Sigmoid colon (tissue), 7 donors: ENCODE measurements at regions of chr15 and their contacts with region 1.

Region 1: DNA sequence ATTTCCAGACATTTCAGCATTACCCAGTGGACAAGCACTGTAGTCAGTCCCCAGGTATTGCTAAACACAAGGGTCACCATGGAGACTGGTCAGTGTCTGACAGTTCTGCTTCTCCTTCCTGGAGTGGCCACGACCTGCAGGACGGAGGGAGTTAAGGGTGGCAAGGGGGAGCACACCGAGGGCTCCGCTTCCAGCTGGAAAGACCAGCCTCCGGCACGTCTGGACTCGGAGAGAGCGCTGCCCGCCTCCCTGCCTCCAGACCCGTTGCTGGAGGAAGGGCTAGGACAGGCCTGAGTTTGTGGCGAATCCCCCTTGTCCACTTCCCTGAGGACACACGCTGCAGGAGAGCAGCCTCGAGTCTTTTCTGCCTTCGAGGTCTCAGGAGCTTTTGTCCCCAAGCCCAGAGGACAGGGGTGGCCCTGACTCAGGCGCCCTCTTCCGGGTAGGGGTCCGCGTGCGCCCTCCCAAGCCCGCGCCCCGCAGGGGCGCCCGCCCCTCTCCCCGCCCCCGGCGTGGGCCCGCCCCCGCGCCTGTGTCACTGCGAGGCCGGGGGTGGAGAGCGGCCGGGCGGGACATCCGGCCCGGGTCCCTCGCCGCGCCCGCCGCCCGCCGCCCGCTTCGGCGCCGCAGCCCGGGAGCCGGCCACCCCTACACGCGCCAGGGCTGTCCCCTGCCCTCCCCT is at the start of gene CHST14:
- DNase-seq: peak; percentile 75
- H3K4me3 ChIP-seq: peak within 1 kb of the TSS; percentile 61 to 92 (median 82)
- H3K27ac ChIP-seq: peak within 1 kb of the TSS; percentile 84 to 89 (median 88)
- H3K4me1 ChIP-seq: peaks cover 0 to 22% (median 18%) of the 10 kb centered on the region in 4 donors
- H3K27me3 ChIP-seq: no peaks in the 10 kb centered on the region
- CTCF ChIP-seq: no peak
- EP300 ChIP-seq: no peak
- POLR2A ChIP-seq: no peak
- total RNA-seq, gene CHST14: 6.4 to 10.2 (median 7.4) TPM

Region 2: DNA sequence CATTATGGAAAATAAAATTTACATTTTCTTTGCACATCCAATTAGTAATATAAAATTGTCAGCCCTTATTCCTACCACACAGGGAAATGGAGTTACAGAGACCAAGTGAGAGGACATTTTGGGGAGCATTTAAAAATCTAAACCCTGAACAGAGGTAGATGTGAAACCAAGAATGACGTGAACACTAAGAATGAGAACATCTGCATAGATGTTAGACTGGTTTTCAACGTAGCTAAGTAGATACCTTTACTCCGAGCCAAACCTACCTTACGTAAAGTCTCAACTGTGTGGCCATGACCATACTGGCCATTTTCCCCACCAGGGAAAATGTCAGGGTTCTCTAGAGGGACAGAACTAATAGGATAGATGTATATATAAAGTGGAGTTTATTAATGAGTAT is 941.1 kb before region 1 on chr15:
- intact Hi-C with region 1: no loop called
- DNase-seq: no peak
- H3K4me3 ChIP-seq: no peak overlapping the region
- H3K27ac ChIP-seq: no peak overlapping the region
- H3K4me1 ChIP-seq: peaks cover 0 to 9% (median 4%) of the 10 kb centered on the region in 4 donors
- H3K27me3 ChIP-seq: no peaks in the 10 kb centered on the region
- CTCF ChIP-seq: no peak
- EP300 ChIP-seq: no peak
- POLR2A ChIP-seq: no peak

Region 3: GRCh38 chr15:40367686-40368611 is 102.6 kb before region 1 on chr15:
- intact Hi-C with region 1: no loop called
- DNase-seq: peak; percentile 92
- H3K4me3 ChIP-seq: peak overlapping the region in 3 of 4 donors; percentile 34 to 48 (median 41)
- H3K27ac ChIP-seq: peak overlapping the region; percentile 25 to 82 (median 74)
- H3K4me1 ChIP-seq: peaks cover 0 to 23% (median 21%) of the 10 kb centered on the region in 4 donors
- H3K27me3 ChIP-seq: no peaks in the 10 kb centered on the region
- CTCF ChIP-seq: peak; percentile 70 to 80 (median 76)
- EP300 ChIP-seq: no peak
- POLR2A ChIP-seq: no peak

Region 4: GRCh38 chr15:40440743-40441564 is 29.6 kb before region 1 on chr15 and contains the start of gene BAHD1:
- intact Hi-C with region 1: loop called (anchors 2 kb)
- DNase-seq: peak; percentile 98
- H3K4me3 ChIP-seq: peak within 1 kb of the TSS; percentile 89 to 98 (median 92)
- H3K27ac ChIP-seq: peak within 1 kb of the TSS; percentile 79 to 85 (median 82)
- H3K4me1 ChIP-seq: peaks cover 0 to 65% (median 57%) of the 10 kb centered on the region in 4 donors
- H3K27me3 ChIP-seq: peaks cover 15 to 25% (median 19%) of the 10 kb centered on the region in 3 donors
- CTCF ChIP-seq: no peak
- EP300 ChIP-seq: no peak
- POLR2A ChIP-seq: no peak
- total RNA-seq, gene BAHD1: 7.7 to 16.3 (median 9.3) TPM

Region 5: GRCh38 chr15:40506964-40507571 is 36.5 kb after region 1 on chr15:
- intact Hi-C with region 1: loop called (anchors 2 kb)
- DNase-seq: peak; percentile 89
- H3K4me3 ChIP-seq: peak overlapping the region; percentile 4 to 38 (median 32)
- H3K27ac ChIP-seq: peak overlapping the region in 2 of 4 donors; percentile 32 to 35
- H3K4me1 ChIP-seq: peaks cover 0 to 21% (median 11%) of the 10 kb centered on the region in 4 donors
- H3K27me3 ChIP-seq: no peaks in the 10 kb centered on the region
- CTCF ChIP-seq: peak; percentile 44 to 68 (median 58)
- EP300 ChIP-seq: no peak
- POLR2A ChIP-seq: no peak

Region 6: DNA sequence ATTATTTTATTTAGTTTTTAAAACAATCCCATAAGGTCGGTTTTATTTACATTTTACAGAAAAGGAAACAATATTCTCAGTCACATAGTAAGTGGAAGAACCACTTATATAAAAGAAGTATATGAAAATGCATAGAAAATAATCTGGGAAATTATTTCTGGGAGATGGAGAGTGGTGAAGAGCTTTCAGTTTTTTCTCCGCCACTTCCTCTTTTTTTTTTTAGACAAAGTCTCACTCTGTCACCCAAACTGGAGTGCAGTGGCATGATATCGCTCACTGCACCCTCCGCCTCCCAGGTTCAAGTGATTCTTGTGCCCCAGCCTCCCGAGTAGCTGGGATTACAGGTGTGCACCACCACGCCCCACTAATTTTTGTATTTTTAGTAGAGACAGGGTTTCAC is 245.6 kb after region 1 on chr15:
- intact Hi-C with region 1: no loop called
- DNase-seq: no peak
- H3K4me3 ChIP-seq: no peak overlapping the region
- H3K27ac ChIP-seq: no peak overlapping the region
- H3K4me1 ChIP-seq: no peaks in the 10 kb centered on the region
- H3K27me3 ChIP-seq: no peaks in the 10 kb centered on the region
- CTCF ChIP-seq: no peak
- EP300 ChIP-seq: no peak
- POLR2A ChIP-seq: no peak